A549 (cell line): ENCODE measurements at regions of chr22 and their contacts with region 1.

Region 1: GRCh38 chr22:25702040-25702439 is 39.9 kb upstream of the MYO18B start:
- DNase-seq: no peak
- ATAC-seq: no peak
- H3K4me3 ChIP-seq: no peak overlapping the region
- H3K27ac ChIP-seq: no peak overlapping the region
- H3K4me1 ChIP-seq: no peaks in the 10 kb centered on the region
- CTCF ChIP-seq: peak; percentile 49; the same call in 2 of the 3 replicates
- EP300 ChIP-seq: no peak
- POLR2A ChIP-seq: no peak
- RAD21 ChIP-seq: peak; percentile 62 to 67; a peak in 4 of 5 replicates

Region 2: DNA sequence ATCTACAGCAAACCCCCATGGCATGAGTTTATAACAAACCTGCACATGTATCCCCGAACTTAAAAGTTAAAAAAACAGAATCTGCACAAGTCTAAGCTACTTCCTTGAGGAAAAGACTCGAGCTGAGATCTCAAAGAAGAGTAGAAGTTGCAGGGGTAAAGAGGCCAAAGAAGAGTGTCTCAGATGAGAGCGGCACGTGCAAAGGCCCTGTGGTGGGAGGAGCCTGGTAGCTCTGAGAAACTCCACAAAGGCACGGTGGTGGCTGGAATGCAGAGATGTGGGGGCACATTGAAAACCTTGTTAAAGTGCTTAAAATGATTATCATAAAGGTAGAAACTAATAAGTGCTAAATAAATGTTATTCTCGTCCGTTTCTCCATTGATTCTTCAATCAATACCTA is 240.7 kb before region 1 on chr22:
- CTCF ChIA-PET with region 1: interaction called, 20 read pairs
- POLR2A ChIA-PET with region 1: no interaction called
- DNase-seq: no peak
- ATAC-seq: no peak
- H3K4me3 ChIP-seq: no peak overlapping the region
- H3K27ac ChIP-seq: no peak overlapping the region
- H3K4me1 ChIP-seq: no peaks in the 10 kb centered on the region
- CTCF ChIP-seq: no peak
- EP300 ChIP-seq: no peak
- POLR2A ChIP-seq: no peak
- RAD21 ChIP-seq: no peak

Region 3: DNA sequence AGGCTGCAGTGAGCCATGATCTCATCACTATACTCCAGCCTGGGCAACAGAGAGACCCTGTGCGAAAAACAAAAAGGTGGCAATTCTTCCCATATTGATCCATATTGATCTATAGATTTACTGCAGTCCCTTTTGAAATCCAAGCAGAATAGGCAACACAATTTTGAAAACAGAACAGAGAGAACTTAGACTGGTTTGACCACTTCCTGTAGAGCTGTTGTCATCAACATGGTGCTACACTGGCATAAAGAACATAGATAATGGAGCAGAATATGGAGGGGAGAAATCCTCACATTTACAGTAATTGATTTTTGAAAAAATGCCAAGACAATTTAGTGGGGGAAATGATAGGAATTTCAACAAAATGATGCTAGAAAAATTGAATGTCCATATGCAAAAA is 103.4 kb before region 1 on chr22:
- CTCF ChIA-PET with region 1: no interaction called
- POLR2A ChIA-PET with region 1: no interaction called
- DNase-seq: no peak
- ATAC-seq: no peak
- H3K4me3 ChIP-seq: no peak overlapping the region
- H3K27ac ChIP-seq: no peak overlapping the region
- H3K4me1 ChIP-seq: peaks cover 7% of the 10 kb centered on the region; the same call in 2 of the 3 replicates
- CTCF ChIP-seq: no peak
- EP300 ChIP-seq: no peak
- POLR2A ChIP-seq: no peak
- RAD21 ChIP-seq: no peak

Region 4: DNA sequence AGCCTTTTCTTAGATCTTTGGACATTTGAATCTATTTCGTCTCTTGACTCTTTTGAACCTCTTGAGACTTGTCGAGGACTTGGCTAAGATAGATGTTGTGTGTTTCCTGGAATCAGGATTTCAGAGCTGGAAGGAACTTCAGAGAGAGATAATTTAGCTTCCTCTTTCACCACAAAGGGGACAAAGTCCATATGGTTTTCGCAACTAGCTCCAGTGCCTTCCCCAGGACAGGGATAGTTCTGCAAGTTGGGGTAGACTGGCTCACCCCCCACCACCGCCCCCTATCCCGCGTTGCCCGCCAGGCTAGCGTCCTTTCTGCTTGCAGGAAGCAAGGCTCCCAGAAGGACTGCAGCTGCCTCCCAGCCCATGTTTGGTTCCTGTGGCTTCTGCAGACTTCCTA is 35.7 kb before region 1 on chr22:
- CTCF ChIA-PET with region 1: no interaction called
- POLR2A ChIA-PET with region 1: no interaction called
- DNase-seq: peak in 1 of 2 experiments; percentile 19
- ATAC-seq: no peak
- H3K4me3 ChIP-seq: no peak overlapping the region
- H3K27ac ChIP-seq: peak overlapping the region in 1 of 2 experiments; percentile 69; a peak in 3 of 6 replicates
- H3K4me1 ChIP-seq: peaks cover 38% of the 10 kb centered on the region
- CTCF ChIP-seq: no peak
- EP300 ChIP-seq: no peak
- POLR2A ChIP-seq: no peak
- RAD21 ChIP-seq: no peak